Activated CD8-positive, alpha-beta memory T cell treated with anti-CD3 and anti-CD28 coated beads, Interleukin-2, amount 10 ng/mL, durations not matched to agents 7 days and 5 days (primary cell): ENCODE measurements at regions of chr12 and their contacts with region 1.

Region 1: GRCh38 chr12:57782608-57783465 is at the start of gene TSFM:
- DNase-seq: peak; percentile 97
- ATAC-seq: peak; percentile 93
- H3K4me3 Mint-ChIP-seq: peak within 1 kb of the TSS; percentile 97
- H3K27ac Mint-ChIP-seq: peak within 1 kb of the TSS; percentile 96
- H3K4me1 Mint-ChIP-seq: peaks cover 38% of the 10 kb centered on the region
- H3K27me3 Mint-ChIP-seq: no peaks in the 10 kb centered on the region
- total RNA-seq, gene TSFM: 32.2 to 45.8 TPM

Region 2: GRCh38 chr12:57726151-57726883 is 56.5 kb before region 1 on chr12:
- CTCF ChIA-PET with region 1: no interaction called
- DNase-seq: peak; percentile 46
- ATAC-seq: peak; percentile 50
- H3K4me3 Mint-ChIP-seq: peak overlapping the region; percentile 28
- H3K27ac Mint-ChIP-seq: peak overlapping the region; percentile 15
- H3K4me1 Mint-ChIP-seq: peaks cover 2% of the 10 kb centered on the region
- H3K27me3 Mint-ChIP-seq: no peaks in the 10 kb centered on the region

Region 3: DNA sequence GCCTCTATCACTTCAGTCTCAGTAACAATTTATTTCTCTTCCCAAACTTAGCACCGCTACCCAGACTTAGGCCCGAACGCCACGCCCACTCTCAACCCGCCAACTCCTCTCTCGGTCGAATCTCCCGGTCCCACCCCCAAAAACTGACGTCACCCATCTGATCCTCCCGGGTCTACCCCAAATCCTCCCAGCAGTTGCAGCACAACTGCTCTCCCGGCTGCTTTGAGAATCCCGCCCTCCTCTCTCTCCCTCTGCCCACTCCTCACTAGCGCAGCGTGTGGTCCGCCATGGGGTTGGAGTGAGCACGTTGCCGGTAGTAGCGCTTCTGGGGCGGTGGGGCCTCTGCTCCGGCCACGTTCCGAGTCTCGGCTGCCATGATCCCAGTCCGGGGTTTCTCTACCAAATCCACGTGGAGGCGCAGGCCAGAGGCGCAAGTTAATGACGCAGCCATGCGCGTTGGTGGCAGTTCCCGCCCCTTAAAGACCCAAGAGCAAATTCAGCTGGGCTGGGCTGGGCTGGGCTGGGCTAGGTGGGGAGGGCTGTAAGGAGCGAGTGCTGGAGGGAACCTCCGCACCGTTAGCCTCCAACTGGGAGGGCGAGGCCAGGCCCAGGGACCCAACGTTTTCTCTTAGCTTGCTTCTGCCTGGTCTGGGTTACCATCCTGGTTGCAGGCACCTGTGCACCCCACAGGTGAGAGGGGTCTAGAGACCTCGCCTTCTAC is 11.0 kb before region 1 on chr12 and contains the start of gene METTL1:
- CTCF ChIA-PET with region 1: interaction called, 14 read pairs
- DNase-seq: peak; percentile 97
- ATAC-seq: peak; percentile 92
- H3K4me3 Mint-ChIP-seq: peak within 1 kb of the TSS; percentile 99
- H3K27ac Mint-ChIP-seq: peak within 1 kb of the TSS; percentile 98
- H3K4me1 Mint-ChIP-seq: peaks cover 26% of the 10 kb centered on the region
- H3K27me3 Mint-ChIP-seq: peaks cover 1% of the 10 kb centered on the region
- total RNA-seq, gene METTL1: 22.1 to 32.1 TPM

Region 4: DNA sequence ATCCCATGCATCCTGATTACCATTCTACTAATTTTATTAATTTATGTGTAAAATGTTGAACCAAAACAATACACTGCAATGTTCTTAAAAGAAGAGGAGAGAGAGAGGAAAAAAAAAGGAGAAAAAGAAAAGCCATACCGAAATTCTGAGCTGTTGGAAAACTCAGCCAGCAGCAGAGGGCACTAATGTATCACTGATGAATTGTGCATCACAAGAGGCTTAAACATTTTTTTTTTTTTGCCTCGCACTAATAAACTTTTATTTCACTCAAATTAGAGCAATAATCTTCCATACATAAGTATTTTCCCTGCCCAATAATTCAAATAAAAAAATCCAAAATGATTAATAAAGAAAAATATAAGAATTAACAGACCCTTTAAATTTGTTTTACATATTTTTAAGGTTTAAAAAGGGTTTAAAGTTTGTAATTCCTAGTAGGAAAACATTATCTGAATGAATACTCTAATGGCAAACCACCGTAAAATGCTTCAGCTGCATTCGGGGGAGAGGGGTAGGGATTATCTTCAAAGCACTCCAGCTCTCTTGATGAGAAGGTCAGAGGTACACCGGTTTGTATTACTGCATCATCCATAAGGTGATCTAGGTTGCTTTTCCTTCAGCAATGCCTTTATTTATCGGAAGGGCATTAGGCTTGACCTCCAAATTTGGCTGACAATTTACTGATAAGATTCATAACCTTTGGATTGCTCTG is 200.5 kb after region 1 on chr12:
- CTCF ChIA-PET with region 1: no interaction called
- DNase-seq: no peak
- ATAC-seq: no peak
- H3K4me3 Mint-ChIP-seq: no peak overlapping the region
- H3K27ac Mint-ChIP-seq: no peak overlapping the region
- H3K4me1 Mint-ChIP-seq: no peaks in the 10 kb centered on the region
- H3K27me3 Mint-ChIP-seq: peaks cover 10% of the 10 kb centered on the region